SK-N-SH (cell line): ENCODE measurements at regions of chr1 and their contacts with region 1.

Region 1: GRCh38 chr1:30801771-30802198 is 44.2 kb upstream of the LAPTM5 start:
- DNase-seq: peak; percentile 86
- H3K4me3 ChIP-seq: peak overlapping the region in 1 of 2 experiments; percentile 38; a peak in 1 of 4 replicates
- H3K27ac ChIP-seq: no peak overlapping the region
- H3K4me1 ChIP-seq: peaks cover 12 to 15% of the 10 kb centered on the region in 2 experiments; a peak in 3 of 4 replicates
- H3K27me3 ChIP-seq: no peaks in the 10 kb centered on the region
- CTCF ChIP-seq: peak; percentile 96
- EP300 ChIP-seq: no peak
- RAD21 ChIP-seq: peak; percentile 97

Region 2: DNA sequence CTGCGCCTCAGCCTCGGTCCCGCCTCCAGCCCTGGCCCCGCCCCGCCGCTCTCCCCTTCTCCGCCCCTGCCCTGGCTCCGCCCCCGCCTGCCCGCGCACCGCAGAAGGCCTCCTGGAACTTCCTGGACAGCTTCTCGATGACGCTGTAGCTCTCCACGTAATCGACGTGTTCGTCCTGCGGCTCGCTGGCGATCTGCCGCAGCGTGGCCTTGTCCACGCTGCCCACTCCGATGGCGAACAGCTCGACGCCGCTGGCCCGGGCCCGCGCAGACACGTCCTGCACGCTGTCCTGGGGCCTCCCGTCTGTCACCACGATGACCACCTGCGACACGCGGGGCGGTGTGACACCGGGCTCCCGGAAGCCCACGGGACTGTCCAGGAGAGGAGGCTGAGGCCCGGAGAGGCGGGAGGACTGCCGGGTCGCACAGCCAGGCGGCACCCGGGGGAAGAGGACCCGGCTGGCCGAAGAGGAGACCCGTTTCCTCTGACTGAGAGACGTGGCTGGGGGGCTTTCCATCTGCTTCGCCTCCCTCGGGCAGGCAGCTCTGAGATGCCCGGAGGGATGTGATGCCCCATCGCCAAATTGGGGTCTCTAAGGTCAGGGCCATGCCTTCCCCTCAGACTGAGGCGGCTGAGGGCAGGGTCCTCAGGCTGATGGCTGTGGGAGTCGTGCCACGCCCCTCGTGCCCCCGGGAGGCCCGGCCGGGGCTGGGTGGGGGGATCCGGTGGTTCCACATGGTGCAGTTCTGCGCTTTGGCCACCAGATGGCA is 83.0 kb before region 1 on chr1:
- CTCF ChIA-PET with region 1: interaction called, 61 read pairs
- POLR2A ChIA-PET with region 1: no interaction called
- DNase-seq: peak; percentile 93
- H3K4me3 ChIP-seq: peak overlapping the region; percentile 62 to 65
- H3K27ac ChIP-seq: peak overlapping the region; percentile 89 to 95
- H3K4me1 ChIP-seq: peaks cover 3 to 14% of the 10 kb centered on the region in 2 experiments; a peak in 2 of 4 replicates
- H3K27me3 ChIP-seq: no peaks in the 10 kb centered on the region
- CTCF ChIP-seq: peak; percentile 95
- EP300 ChIP-seq: no peak
- RAD21 ChIP-seq: no peak

Region 3: DNA sequence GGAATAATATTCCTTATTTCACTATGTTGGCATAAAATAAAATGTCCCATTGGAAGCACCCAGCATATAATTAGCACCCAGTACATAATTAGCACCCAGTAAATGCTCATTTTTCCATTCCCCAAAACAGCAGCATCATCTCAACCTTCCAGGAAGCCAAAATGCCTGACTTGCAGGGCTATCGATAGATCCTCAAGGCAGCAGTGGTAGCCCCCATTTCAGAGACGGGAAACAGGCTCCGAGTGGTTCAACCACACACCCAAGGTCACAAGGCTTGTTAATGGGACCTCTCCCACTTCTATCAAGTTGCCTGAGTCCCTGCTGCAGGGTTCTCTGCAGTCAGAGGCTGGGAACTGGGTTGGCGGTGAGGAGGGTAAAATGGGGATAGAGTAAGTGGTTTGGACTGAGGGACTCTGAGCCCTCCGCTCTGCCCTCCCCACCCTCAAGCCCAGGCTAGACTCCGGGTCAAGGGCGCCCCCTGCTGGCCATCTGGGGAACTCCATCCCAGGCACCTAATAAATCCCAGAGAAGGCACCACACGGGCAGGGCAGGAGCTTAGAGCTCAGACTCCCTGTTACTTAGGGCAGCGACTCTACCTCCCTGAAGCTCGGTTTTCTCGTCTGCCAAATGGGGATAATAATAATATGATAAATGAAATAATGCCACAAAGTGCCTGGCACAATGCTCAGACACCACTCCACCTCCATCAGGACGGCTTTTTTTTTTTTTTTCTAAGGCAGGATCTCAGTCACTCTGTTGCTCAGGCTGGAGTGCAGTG is 22.3 kb before region 1 on chr1:
- CTCF ChIA-PET with region 1: interaction called, 356 read pairs
- POLR2A ChIA-PET with region 1: no interaction called
- DNase-seq: peak; percentile 88
- H3K4me3 ChIP-seq: peak overlapping the region in 1 of 2 experiments; percentile 37; a peak in 1 of 4 replicates
- H3K27ac ChIP-seq: peak overlapping the region in 1 of 2 experiments; percentile 86; a peak in 2 of 4 replicates
- H3K4me1 ChIP-seq: peaks cover 0 to 20% of the 10 kb centered on the region in 2 experiments; a peak in 1 of 4 replicates
- H3K27me3 ChIP-seq: no peaks in the 10 kb centered on the region
- CTCF ChIP-seq: peak; percentile 92
- EP300 ChIP-seq: no peak
- RAD21 ChIP-seq: peak; percentile 89

Region 4: DNA sequence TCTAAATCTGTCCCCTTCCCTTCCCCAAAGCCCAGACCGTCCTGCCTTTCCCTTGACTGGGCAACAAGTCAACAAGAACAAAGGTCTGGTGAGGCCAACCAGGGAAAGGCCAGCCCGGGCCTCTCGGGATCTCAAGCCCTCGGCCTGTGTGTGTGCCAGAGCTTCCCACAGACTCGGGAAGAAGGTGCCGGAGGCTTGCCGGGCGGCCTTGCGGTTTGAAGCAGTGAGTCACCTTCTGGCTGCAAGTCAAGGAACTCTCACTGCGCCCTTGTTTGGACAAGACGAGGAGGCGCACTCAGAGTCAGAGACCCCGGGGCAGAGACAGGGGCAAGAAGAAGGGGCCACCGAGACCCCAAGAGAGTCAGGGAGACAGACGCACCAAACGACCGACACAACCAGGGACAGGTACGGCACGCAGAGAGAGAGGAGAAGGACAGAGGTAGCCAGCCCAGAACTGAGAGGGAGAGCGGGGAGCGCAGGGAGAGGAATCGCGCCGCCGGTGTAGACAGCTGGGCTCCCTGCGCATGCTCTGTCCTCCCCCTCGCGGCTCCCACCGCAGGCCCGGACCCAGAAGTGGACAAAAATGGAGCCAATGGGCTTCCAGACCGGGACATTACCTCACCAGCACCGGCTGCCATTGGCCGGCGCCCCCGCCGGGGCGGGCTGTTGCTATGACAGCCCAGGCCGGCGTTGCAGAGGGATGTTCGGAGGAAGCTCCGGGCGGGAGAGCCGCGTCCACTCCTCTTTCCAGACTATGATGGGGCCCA is 22.4 kb after region 1 on chr1:
- CTCF ChIA-PET with region 1: interaction called, 118 read pairs
- POLR2A ChIA-PET with region 1: no interaction called
- DNase-seq: peak; percentile 99
- H3K4me3 ChIP-seq: peak overlapping the region; percentile 54 to 61
- H3K27ac ChIP-seq: peak overlapping the region; percentile 96 to 97
- H3K4me1 ChIP-seq: peaks cover 16 to 25% of the 10 kb centered on the region in 2 experiments
- H3K27me3 ChIP-seq: no peaks in the 10 kb centered on the region
- CTCF ChIP-seq: no peak
- EP300 ChIP-seq: peak; percentile 45 to 91; a peak in 3 of 4 replicates
- RAD21 ChIP-seq: no peak

Region 5: GRCh38 chr1:30847358-30847972 is 45.7 kb after region 1 on chr1:
- CTCF ChIA-PET with region 1: interaction called, 28 read pairs
- POLR2A ChIA-PET with region 1: no interaction called
- DNase-seq: no peak
- H3K4me3 ChIP-seq: no peak overlapping the region
- H3K27ac ChIP-seq: no peak overlapping the region
- H3K4me1 ChIP-seq: peaks cover 0 to 3% of the 10 kb centered on the region in 2 experiments; a peak in 1 of 4 replicates
- H3K27me3 ChIP-seq: no peaks in the 10 kb centered on the region
- CTCF ChIP-seq: no peak
- EP300 ChIP-seq: no peak
- RAD21 ChIP-seq: no peak

Region 6: GRCh38 chr1:30881319-30882181 is 79.8 kb after region 1 on chr1:
- CTCF ChIA-PET with region 1: interaction called, 15 read pairs
- POLR2A ChIA-PET with region 1: no interaction called
- DNase-seq: no peak
- H3K4me3 ChIP-seq: no peak overlapping the region
- H3K27ac ChIP-seq: no peak overlapping the region
- H3K4me1 ChIP-seq: peaks cover 8 to 16% of the 10 kb centered on the region in 2 experiments; a peak in 2 of 4 replicates
- H3K27me3 ChIP-seq: no peaks in the 10 kb centered on the region
- CTCF ChIP-seq: no peak
- EP300 ChIP-seq: no peak
- RAD21 ChIP-seq: no peak

Region 7: DNA sequence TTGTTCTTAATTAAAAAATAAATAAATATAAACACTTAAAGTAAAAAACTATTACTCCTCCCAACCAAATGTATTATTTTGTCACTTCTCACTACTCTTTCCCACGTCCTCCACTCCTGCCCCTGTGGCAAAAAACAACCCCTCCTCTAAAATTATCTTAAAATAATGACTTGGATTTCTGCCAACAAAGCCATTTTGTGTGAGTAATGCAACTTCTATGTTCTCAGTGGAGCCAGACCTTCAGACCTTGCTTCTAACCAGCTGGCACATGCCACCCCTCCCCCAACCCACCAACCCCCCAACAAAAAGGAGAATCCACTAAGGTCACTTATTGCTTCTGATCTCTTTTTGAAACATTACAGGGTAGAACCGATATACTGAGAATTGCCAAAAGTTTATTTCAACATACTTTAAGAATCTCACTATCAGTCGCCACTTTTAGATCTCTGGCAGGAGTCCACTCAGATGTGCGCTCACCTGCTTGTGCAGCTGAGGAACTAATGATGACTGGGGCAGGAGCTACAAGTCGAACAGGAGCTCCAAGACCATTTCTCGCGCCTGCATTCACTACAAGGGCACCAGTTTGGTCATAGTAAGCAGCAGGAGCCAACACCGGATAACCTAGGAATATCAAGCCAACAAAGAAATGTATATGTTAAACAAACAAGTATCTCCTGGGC is 165.0 kb after region 1 on chr1:
- CTCF ChIA-PET with region 1: interaction called, 10 read pairs
- POLR2A ChIA-PET with region 1: no interaction called
- DNase-seq: peak; percentile 80
- H3K4me3 ChIP-seq: peak overlapping the region in 1 of 2 experiments; percentile 36; a peak in 1 of 4 replicates
- H3K27ac ChIP-seq: peak overlapping the region; percentile 82 to 92
- H3K4me1 ChIP-seq: peaks cover 22 to 38% of the 10 kb centered on the region in 2 experiments
- H3K27me3 ChIP-seq: no peaks in the 10 kb centered on the region
- CTCF ChIP-seq: no peak
- EP300 ChIP-seq: peak; percentile 52 to 76; a peak in 2 of 4 replicates
- RAD21 ChIP-seq: 0 out of 2 replicates have a peak, but pooled peaks have one; percentile 3